ENCODE measurements at regions of chr7 and their contacts with region 1.

Region 1: GRCh38 chr7:47979145-47979831 is at the start of gene HUS1:
- DNase-seq: peak; percentile 88 to 96 (median 92)
- H3K4me3 ChIP-seq: peak within 1 kb of the TSS; percentile 73 to 99 (median 80)
- H3K4me3 Mint-ChIP-seq: peak within 1 kb of the TSS; percentile 97 to 99
- H3K27ac ChIP-seq: peak within 1 kb of the TSS; percentile 87 to 95
- H3K27ac Mint-ChIP-seq: peak within 1 kb of the TSS; percentile 94 to 100 (median 99)
- H3K4me1 ChIP-seq: peaks cover 15 to 17% of the 10 kb centered on the region in 2 donors
- H3K4me1 Mint-ChIP-seq: peaks cover 9% of the 10 kb centered on the region
- H3K27me3 ChIP-seq: no peaks in the 10 kb centered on the region
- H3K27me3 Mint-ChIP-seq: no peaks in the 10 kb centered on the region
- CTCF ChIP-seq: no peak
- polyA plus RNA-seq, gene HUS1: 37.7 to 45.9 (median 38.8) TPM

Region 2: GRCh38 chr7:48035301-48035966 is 56.1 kb after region 1 on chr7 and contains the start of gene C7orf57:
- intact Hi-C with region 1: loop called in 1 of 2 experiments (anchors 5 kb)
- DNase-seq: peak; percentile 89 to 95 (median 91)
- H3K4me3 ChIP-seq: peak within 1 kb of the TSS; percentile 39 to 78 (median 45)
- H3K4me3 Mint-ChIP-seq: peak within 1 kb of the TSS; percentile 78 to 92
- H3K27ac ChIP-seq: no peak within 1 kb of the TSS
- H3K27ac Mint-ChIP-seq: peak within 1 kb of the TSS in 6 of 7 donors; percentile 10 to 90 (median 78)
- H3K4me1 ChIP-seq: peaks cover 10 to 15% of the 10 kb centered on the region in 2 donors
- H3K4me1 Mint-ChIP-seq: peaks cover 12% of the 10 kb centered on the region
- H3K27me3 ChIP-seq: peaks cover 27 to 54% of the 10 kb centered on the region in 2 donors
- H3K27me3 Mint-ChIP-seq: peaks cover 47 to 61% (median 59%) of the 10 kb centered on the region in 3 donors
- CTCF ChIP-seq: no peak
- polyA plus RNA-seq, gene C7orf57: 0.05 TPM in 1 of 3 donors, not detected in the others

Region 3: GRCh38 chr7:48088559-48089045 is 109.3 kb after region 1 on chr7:
- intact Hi-C with region 1: loop called in 1 of 2 experiments (anchors 5 kb)
- DNase-seq: peak; percentile 86 to 97 (median 90)
- H3K4me3 ChIP-seq: peak overlapping the region; percentile 36 to 93 (median 57)
- H3K4me3 Mint-ChIP-seq: peak overlapping the region; percentile 88 to 92
- H3K27ac ChIP-seq: peak overlapping the region; percentile 97 to 99
- H3K27ac Mint-ChIP-seq: peak overlapping the region; percentile 97 to 100 (median 100)
- H3K4me1 ChIP-seq: peaks cover 60 to 81% of the 10 kb centered on the region in 2 donors
- H3K4me1 Mint-ChIP-seq: peaks cover 75% of the 10 kb centered on the region
- H3K27me3 ChIP-seq: no peaks in the 10 kb centered on the region
- H3K27me3 Mint-ChIP-seq: peaks cover 0 to 2% (median 0%) of the 10 kb centered on the region in 3 donors
- CTCF ChIP-seq: no peak

Region 4: DNA sequence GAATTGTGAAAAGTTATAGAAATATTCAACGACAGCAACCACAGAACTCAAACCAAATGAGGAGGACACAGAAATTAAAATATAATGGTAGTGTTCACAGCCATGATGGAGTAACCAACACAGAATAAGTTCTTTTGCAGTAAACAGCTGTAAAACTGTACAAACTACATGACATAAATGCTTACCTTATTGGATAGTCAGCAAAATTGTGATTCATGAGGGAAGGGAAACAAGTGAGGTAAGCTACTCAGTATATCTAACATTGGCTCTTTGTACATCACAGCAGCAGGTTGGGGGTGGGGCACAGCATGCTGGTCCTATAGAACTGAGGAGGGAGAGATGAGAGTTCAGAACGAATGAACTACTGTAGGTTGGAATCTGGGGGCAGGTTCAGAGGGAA is 1031.4 kb after region 1 on chr7:
- intact Hi-C with region 1: no loop called
- DNase-seq: no peak
- H3K4me3 ChIP-seq: no peak overlapping the region
- H3K4me3 Mint-ChIP-seq: no peak overlapping the region
- H3K27ac ChIP-seq: no peak overlapping the region
- H3K27ac Mint-ChIP-seq: no peak overlapping the region
- H3K4me1 ChIP-seq: no peaks in the 10 kb centered on the region
- H3K4me1 Mint-ChIP-seq: no peaks in the 10 kb centered on the region
- H3K27me3 ChIP-seq: no peaks in the 10 kb centered on the region
- H3K27me3 Mint-ChIP-seq: no peaks in the 10 kb centered on the region
- CTCF ChIP-seq: no peak

Measured in CD14-positive monocyte (primary cell).